Prostate gland (tissue), 2 donors: ENCODE measurements at regions of chr18 and their contacts with region 1.

Region 1: GRCh38 chr18:2932247-2933181 is 80.4 kb downstream of the LPIN2 start:
- DNase-seq: peak; percentile 42
- H3K4me3 ChIP-seq: no peak overlapping the region
- H3K27ac ChIP-seq: no peak overlapping the region
- H3K4me1 ChIP-seq: no peaks in the 10 kb centered on the region
- H3K27me3 ChIP-seq: no peaks in the 10 kb centered on the region
- CTCF ChIP-seq: peak; percentile 54 to 89 (median 79)
- POLR2A ChIP-seq: no peak

Region 2: GRCh38 chr18:2874765-2875164 is 57.7 kb before region 1 on chr18:
- intact Hi-C with region 1: no loop called
- DNase-seq: no peak
- H3K4me3 ChIP-seq: no peak overlapping the region
- H3K27ac ChIP-seq: no peak overlapping the region
- H3K4me1 ChIP-seq: no peaks in the 10 kb centered on the region
- H3K27me3 ChIP-seq: no peaks in the 10 kb centered on the region
- CTCF ChIP-seq: no peak
- POLR2A ChIP-seq: no peak

Region 3: GRCh38 chr18:2985628-2986027 is 53.1 kb after region 1 on chr18:
- intact Hi-C with region 1: loop called (anchors 10 kb)
- DNase-seq: no peak
- H3K4me3 ChIP-seq: no peak overlapping the region
- H3K27ac ChIP-seq: no peak overlapping the region
- H3K4me1 ChIP-seq: no peaks in the 10 kb centered on the region
- H3K27me3 ChIP-seq: no peaks in the 10 kb centered on the region
- CTCF ChIP-seq: peak in 3 of 4 experiments; percentile 29 to 42 (median 36)
- POLR2A ChIP-seq: no peak

Region 4: DNA sequence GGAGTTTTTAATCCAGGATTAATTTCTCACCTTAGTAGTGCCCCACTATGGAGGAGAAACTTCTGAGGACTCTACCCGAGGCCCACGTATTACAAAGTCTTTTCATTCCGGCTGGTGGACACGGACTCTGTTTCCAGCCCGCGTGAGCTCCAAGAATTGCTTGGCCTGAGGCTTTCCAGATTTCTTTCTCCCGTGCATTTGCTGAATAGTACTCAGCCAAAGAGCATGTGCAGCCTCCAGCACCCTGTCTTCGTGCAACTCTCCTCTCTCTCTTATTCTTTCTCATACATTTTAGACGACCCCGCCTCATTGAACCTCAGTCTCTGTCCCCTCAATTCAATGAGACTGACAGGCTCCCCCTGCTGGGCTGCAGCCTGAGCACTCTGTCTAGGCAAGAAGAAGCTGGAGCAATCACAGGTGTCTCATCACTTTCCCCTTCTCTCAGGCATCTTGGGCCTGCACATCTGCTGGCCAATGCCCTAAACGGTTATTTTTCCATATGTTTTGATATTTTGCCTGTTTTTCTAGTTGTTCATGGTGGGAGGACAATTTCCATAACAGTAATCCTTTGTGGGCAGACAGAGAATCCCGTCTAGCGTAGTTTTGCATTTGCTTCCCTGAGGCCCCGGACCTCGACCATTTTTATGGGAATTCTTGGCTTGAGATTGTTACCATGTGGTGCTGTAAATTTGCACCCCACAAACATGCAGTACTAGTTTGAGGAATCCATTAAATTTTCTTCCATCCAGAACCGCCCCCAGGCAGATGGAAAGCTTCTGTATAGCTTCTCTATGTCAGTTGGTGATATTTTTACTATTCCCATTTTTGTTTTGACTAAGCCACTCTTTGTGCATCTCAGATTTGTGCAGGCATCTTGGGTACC is 130.5 kb after region 1 on chr18:
- intact Hi-C with region 1: loop called (anchors 2 kb)
- DNase-seq: peak; percentile 40
- H3K4me3 ChIP-seq: no peak overlapping the region
- H3K27ac ChIP-seq: no peak overlapping the region
- H3K4me1 ChIP-seq: no peaks in the 10 kb centered on the region
- H3K27me3 ChIP-seq: no peaks in the 10 kb centered on the region
- CTCF ChIP-seq: peak in 3 of 4 experiments; percentile 47 to 63 (median 59)
- POLR2A ChIP-seq: no peak

Region 5: DNA sequence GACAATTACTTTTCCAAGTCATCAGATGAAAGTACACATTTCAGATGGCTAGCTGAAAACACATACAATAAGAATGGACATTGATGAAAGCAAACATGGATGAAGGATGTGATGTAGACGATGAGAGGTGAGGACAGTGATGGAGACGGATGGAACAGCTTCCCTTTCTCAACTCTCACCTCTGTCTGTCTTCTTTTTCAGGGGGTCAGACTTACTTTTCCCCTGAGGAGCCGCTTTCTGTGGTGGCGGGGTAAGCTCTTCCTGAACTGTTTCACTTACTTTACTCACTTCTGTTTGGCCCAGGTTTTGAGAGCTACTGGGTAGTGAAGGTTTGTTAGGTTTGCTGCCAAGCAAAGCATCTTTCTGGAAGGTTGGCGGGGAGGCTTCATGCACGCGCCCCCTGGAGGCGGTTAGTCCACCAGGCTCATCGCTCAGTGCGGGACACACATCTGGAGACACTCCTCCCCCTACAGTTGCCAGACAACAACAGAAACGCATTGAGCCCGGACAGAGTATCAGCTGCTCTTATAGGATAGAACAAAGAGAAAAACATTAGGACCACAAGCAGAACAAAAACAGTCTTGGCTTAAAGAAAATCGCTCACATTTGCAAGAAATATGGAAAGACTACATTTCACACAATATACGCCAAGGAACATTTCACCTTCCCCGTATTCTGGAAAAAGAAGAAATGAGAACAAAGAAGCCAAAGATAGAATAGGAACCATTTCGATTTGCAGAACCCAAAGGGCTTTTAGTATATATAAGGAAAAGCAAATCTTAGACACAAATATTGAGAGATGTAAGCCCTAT is 196.7 kb after region 1 on chr18:
- intact Hi-C with region 1: loop called (anchors 5 kb)
- DNase-seq: peak; percentile 64
- H3K4me3 ChIP-seq: no peak overlapping the region
- H3K27ac ChIP-seq: no peak overlapping the region
- H3K4me1 ChIP-seq: no peaks in the 10 kb centered on the region
- H3K27me3 ChIP-seq: no peaks in the 10 kb centered on the region
- CTCF ChIP-seq: peak; percentile 69 to 77 (median 74)
- POLR2A ChIP-seq: no peak

Region 6: GRCh38 chr18:3151399-3152264 is 219.1 kb after region 1 on chr18:
- intact Hi-C with region 1: loop called (anchors 10 kb)
- DNase-seq: no peak
- H3K4me3 ChIP-seq: no peak overlapping the region
- H3K27ac ChIP-seq: no peak overlapping the region
- H3K4me1 ChIP-seq: no peaks in the 10 kb centered on the region
- H3K27me3 ChIP-seq: no peaks in the 10 kb centered on the region
- CTCF ChIP-seq: peak in 3 of 4 experiments; percentile 53 to 65 (median 63)
- POLR2A ChIP-seq: no peak

Region 7: GRCh38 chr18:3245853-3246634 is 313.5 kb after region 1 on chr18:
- intact Hi-C with region 1: loop called (anchors 5 kb)
- DNase-seq: peak; percentile 88
- H3K4me3 ChIP-seq: peak overlapping the region; percentile 91 to 96
- H3K27ac ChIP-seq: peak overlapping the region; percentile 99
- H3K4me1 ChIP-seq: no peaks in the 10 kb centered on the region
- H3K27me3 ChIP-seq: no peaks in the 10 kb centered on the region
- CTCF ChIP-seq: peak; percentile 52 to 97 (median 90)
- POLR2A ChIP-seq: no peak